Activated naive CD4-positive, alpha-beta T cell treated with anti-CD3 and anti-CD28 coated beads for 36 hours (primary cell): ENCODE measurements at regions of chr1 and their contacts with region 1.

Region 1: GRCh38 chr1:230310381-230311163 is 115.6 kb downstream of the PGBD5 start:
- DNase-seq: peak; percentile 75
- H3K4me3 Mint-ChIP-seq: no peak overlapping the region
- H3K27ac Mint-ChIP-seq: no peak overlapping the region
- H3K4me1 Mint-ChIP-seq: peaks cover 10% of the 10 kb centered on the region
- H3K27me3 Mint-ChIP-seq: peaks cover 4% of the 10 kb centered on the region

Region 2: GRCh38 chr1:230153641-230154296 is 156.8 kb before region 1 on chr1:
- CTCF ChIA-PET with region 1: no interaction called
- intact Hi-C with region 1: no loop called
- DNase-seq: no peak
- H3K4me3 Mint-ChIP-seq: no peak overlapping the region
- H3K27ac Mint-ChIP-seq: no peak overlapping the region
- H3K4me1 Mint-ChIP-seq: peaks cover 52% of the 10 kb centered on the region
- H3K27me3 Mint-ChIP-seq: no peaks in the 10 kb centered on the region

Region 3: GRCh38 chr1:230208619-230209261 is 101.8 kb before region 1 on chr1:
- CTCF ChIA-PET with region 1: no interaction called
- intact Hi-C with region 1: loop called (anchors 2 kb)
- DNase-seq: peak; percentile 69
- H3K4me3 Mint-ChIP-seq: no peak overlapping the region
- H3K27ac Mint-ChIP-seq: peak overlapping the region; percentile 79
- H3K4me1 Mint-ChIP-seq: peaks cover 47% of the 10 kb centered on the region
- H3K27me3 Mint-ChIP-seq: no peaks in the 10 kb centered on the region